Ovary (tissue), 10 donors: ENCODE measurements at regions of chr4 and their contacts with region 1.

Region 1: DNA sequence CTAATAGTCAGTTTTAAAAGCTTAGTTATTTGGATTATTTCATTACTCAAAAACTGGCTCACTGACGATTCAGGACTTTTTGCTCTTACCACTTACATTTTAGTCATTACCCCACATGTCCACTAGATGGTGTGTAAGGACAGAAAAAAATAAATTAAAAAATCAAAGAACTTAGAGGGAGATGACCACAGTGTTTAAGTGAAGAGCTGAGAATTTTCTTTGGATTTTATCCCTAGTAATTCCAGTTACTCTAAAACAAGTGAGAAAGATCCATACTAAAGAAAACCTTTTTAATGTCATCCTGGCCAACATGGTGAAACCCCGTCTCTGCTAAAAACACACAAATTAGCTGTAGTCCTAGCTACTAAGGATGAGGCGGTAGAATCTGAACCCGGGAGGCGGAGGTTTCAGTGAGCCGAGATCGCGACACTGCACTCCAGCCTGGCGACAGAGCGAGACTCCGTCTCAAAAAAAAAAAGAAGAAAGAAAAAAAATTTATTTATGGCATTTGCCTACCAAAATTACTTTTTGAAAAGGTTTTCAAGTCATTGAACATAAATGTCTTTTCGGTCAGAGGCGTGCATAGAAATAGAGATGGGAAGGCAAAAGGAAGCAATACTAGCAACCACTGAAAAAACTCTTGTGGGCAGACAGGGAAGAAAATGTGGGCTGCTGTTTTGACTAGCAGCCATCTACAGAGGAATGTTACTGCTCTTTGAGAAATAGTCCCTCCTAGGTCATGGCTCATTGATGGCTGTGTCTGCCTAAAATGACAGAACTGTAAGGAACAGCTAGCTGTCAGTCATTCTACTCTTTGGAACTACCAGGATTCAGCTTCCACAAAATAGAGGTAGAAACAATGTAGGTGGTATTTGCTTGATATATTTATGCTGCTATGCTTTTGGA is 26.6 kb upstream of the TMPRSS11B start:
- DNase-seq: no peak
- H3K4me3 ChIP-seq: no peak overlapping the region
- H3K27ac ChIP-seq: no peak overlapping the region
- H3K4me1 ChIP-seq: peaks cover 4% of the 10 kb centered on the region
- H3K27me3 ChIP-seq: no peaks in the 10 kb centered on the region
- CTCF ChIP-seq: peak; percentile 55 to 64 (median 60)
- EP300 ChIP-seq: no peak
- POLR2A ChIP-seq: no peak

Region 2: GRCh38 chr4:68375667-68376559 is 103.8 kb after region 1 on chr4:
- intact Hi-C with region 1: loop called in 3 of 4 experiments (anchors 5 to 10 kb)
- DNase-seq: peak in 2 of 5 donors; percentile 15 to 16
- H3K4me3 ChIP-seq: no peak overlapping the region
- H3K27ac ChIP-seq: no peak overlapping the region
- H3K4me1 ChIP-seq: peaks cover 3% of the 10 kb centered on the region
- H3K27me3 ChIP-seq: no peaks in the 10 kb centered on the region
- CTCF ChIP-seq: peak in 1 of 3 donors; percentile 50
- EP300 ChIP-seq: no peak
- POLR2A ChIP-seq: no peak

Region 3: GRCh38 chr4:68451246-68452211 is 179.4 kb after region 1 on chr4:
- intact Hi-C with region 1: no loop called
- DNase-seq: no peak
- H3K4me3 ChIP-seq: no peak overlapping the region
- H3K27ac ChIP-seq: no peak overlapping the region
- H3K4me1 ChIP-seq: no peaks in the 10 kb centered on the region
- H3K27me3 ChIP-seq: no peaks in the 10 kb centered on the region
- CTCF ChIP-seq: no peak
- EP300 ChIP-seq: no peak
- POLR2A ChIP-seq: no peak

Region 4: DNA sequence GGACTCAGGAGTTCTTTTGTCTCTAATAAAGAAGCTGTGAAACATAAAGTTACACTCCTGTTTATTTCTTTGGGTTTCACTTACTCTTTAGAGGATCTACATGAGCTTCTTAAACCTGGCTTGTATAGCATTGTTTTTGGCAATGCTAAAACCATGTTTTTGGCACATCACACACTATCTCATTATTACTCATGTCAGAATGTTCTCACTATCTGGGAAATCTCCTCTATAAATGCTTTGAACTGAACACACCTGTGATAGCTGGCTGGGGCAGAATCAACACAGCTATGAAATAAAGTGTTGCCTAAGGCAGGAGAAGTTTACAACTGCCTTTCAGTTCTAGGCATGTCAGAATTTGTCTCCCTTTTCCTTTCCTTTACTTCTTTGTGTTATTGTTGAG is 1435.7 kb after region 1 on chr4:
- intact Hi-C with region 1: loop called in 1 of 4 experiments (anchors 10 kb)
- DNase-seq: no peak
- H3K4me3 ChIP-seq: no peak overlapping the region
- H3K27ac ChIP-seq: no peak overlapping the region
- H3K4me1 ChIP-seq: no peaks in the 10 kb centered on the region
- H3K27me3 ChIP-seq: no peaks in the 10 kb centered on the region
- CTCF ChIP-seq: no peak
- EP300 ChIP-seq: no peak
- POLR2A ChIP-seq: no peak